Activated naive CD4-positive, alpha-beta T cell treated with anti-CD3 and anti-CD28 coated beads for 36 hours (primary cell): ENCODE measurements at regions of chr1 and their contacts with region 1.

Region 1: DNA sequence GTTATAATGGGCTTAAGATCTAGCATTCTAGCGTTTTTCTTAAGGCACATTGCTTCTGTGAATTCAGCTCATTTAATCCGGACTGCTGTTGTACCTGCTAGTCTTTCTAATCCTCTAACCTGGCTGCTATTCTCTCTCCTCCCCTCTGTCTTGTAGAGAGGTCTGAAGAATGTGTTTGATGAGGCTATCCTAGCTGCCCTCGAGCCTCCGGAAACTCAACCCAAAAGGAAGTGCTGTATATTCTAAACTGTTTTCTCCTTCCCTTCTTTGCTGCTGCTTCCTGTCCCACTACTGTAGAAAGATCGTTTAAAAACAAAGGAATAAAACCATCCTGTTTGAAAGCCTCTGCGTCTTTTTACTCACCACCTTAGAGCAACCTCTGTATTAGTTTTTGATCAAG is 37.3 kb downstream of the CDC42 start:
- DNase-seq: no peak
- H3K4me3 Mint-ChIP-seq: peak overlapping the region; percentile 38
- H3K27ac Mint-ChIP-seq: peak overlapping the region; percentile 77
- H3K4me1 Mint-ChIP-seq: peaks cover 89% of the 10 kb centered on the region
- H3K27me3 Mint-ChIP-seq: no peaks in the 10 kb centered on the region

Region 2: GRCh38 chr1:22018583-22019559 is 70.9 kb before region 1 on chr1:
- CTCF ChIA-PET with region 1: no interaction called
- intact Hi-C with region 1: loop called (anchors 1 kb)
- DNase-seq: peak; percentile 83
- H3K4me3 Mint-ChIP-seq: no peak overlapping the region
- H3K27ac Mint-ChIP-seq: peak overlapping the region; percentile 73
- H3K4me1 Mint-ChIP-seq: peaks cover 26% of the 10 kb centered on the region
- H3K27me3 Mint-ChIP-seq: no peaks in the 10 kb centered on the region

Region 3: DNA sequence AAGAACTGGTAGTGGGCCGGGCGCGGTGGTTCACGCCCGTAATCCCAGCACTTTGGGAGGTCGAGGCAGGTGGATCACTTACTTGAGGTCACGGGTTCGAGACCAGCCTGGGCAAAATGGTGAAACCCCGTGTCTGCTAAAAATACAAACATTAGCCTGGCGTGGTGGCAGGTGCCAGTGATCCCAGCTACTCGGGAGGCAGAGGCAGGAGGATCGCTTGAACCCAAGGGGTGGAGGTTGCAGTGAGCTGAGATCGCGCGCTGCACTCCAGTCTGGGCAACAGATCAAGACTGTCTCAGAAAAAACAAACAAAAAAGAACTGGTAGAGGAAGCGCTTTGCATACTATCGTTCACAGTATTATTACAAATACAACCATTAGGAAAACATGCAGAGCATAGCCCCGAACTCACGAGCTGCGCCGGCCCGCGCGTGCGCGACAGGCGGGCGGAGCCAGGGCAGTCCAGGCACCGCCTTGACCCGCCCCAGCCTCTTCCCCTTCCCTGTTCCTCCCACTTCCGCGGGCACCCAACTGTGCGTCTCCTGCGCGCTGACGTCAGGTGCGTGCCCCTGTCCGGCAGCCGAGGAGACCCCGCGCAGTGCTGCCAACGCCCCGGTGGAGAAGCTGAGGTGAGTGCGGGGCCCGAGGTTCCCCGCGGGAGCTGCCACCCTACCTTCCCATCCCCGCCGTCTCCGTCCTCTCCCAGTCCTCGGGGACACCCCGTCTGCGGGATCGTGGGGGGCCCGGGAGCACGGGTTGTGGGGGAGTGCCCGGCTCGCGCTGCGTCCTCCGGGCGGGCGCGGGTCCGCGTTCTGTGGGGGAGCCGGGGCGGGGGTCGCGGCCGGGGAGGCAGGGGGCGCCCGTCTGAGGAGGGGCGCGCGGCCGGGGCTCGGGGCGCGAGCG is 37.4 kb before region 1 on chr1 and contains the start of gene CDC42:
- CTCF ChIA-PET with region 1: interaction called, 3 read pairs
- intact Hi-C with region 1: loop called (anchors 1 kb)
- DNase-seq: peak; percentile 98
- H3K4me3 Mint-ChIP-seq: peak within 1 kb of the TSS; percentile 95
- H3K27ac Mint-ChIP-seq: peak within 1 kb of the TSS; percentile 98
- H3K4me1 Mint-ChIP-seq: peaks cover 63% of the 10 kb centered on the region
- H3K27me3 Mint-ChIP-seq: no peaks in the 10 kb centered on the region
- total RNA-seq, gene CDC42: 318 to 322 TPM

Region 4: GRCh38 chr1:22077728-22078127 is 12.1 kb before region 1 on chr1:
- CTCF ChIA-PET with region 1: no interaction called
- intact Hi-C with region 1: loop called (anchors 2 kb)
- DNase-seq: no peak
- H3K4me3 Mint-ChIP-seq: no peak overlapping the region
- H3K27ac Mint-ChIP-seq: peak overlapping the region; percentile 42
- H3K4me1 Mint-ChIP-seq: peaks cover 85% of the 10 kb centered on the region
- H3K27me3 Mint-ChIP-seq: no peaks in the 10 kb centered on the region

Region 5: DNA sequence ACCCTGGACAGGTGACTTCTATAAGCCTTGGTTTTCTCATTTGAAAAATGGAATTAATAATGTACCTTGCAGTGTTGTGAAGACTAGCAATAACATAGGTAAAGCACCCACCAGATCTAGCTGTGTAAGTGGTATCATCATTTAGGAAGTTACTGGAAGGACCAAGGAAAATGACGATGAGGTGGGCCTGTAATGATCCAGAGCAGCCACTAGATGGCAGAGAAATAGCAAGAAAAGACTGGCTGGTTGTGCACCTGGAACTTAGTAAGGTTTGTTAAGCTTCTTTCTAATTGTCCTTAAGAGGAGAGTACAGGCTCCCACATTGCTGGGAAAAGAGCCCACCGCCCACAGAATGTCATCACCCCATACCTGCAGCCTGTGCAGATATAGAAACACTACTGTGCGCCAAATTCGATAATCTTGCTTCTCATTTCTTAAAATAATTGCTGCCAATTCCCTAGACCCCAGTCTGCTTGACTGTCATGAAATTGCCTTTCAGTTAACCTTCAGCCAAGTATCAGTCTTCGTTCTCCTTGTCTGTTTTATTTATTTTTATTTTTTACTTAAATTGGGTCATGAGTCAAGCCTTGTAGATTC is 15.9 kb after region 1 on chr1:
- CTCF ChIA-PET with region 1: interaction called, 16 read pairs
- intact Hi-C with region 1: loop called (anchors 1 kb)
- DNase-seq: peak; percentile 50
- H3K4me3 Mint-ChIP-seq: no peak overlapping the region
- H3K27ac Mint-ChIP-seq: peak overlapping the region; percentile 74
- H3K4me1 Mint-ChIP-seq: peaks cover 53% of the 10 kb centered on the region
- H3K27me3 Mint-ChIP-seq: no peaks in the 10 kb centered on the region